Endothelial cell of umbilical vein (primary cell): ENCODE measurements at regions of chr1 and their contacts with region 1.

Region 1: GRCh38 chr1:155091071-155091709 is 12.6 kb downstream of the EFNA3 start:
- DNase-seq: peak; percentile 77
- H3K4me3 ChIP-seq: no peak overlapping the region
- H3K27ac ChIP-seq: no peak overlapping the region
- H3K4me1 ChIP-seq: no peaks in the 10 kb centered on the region
- H3K27me3 ChIP-seq: peaks cover 4 to 16% of the 10 kb centered on the region in 2 experiments
- CTCF ChIP-seq: peak; percentile 94 to 99
- POLR2A ChIP-seq: no peak

Region 2: DNA sequence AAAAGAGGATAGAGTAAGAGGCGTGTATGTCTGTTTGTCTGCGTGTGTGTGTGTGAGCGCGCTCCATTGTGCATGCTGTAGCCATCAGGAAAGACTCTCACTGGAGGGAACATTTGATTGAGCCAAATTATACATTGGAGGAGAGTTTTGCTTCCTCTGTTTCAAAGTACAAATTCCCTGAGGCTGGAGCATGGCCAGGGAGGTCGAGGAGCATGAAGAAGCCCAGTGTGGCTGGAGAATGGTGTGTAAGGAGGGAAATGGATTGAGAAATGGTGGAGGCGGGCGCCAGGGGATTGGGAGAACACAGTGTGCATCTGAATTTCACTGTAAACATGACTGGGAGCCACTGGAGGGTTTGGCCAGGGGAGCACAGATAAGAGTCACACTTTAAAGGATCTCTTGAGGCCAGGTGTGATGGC is 14.4 kb after region 1 on chr1:
- CTCF ChIA-PET with region 1: interaction called, 14 read pairs
- POLR2A ChIA-PET with region 1: interaction called, 6 read pairs
- dilution Hi-C with region 1: no loop called
- intact Hi-C with region 1: no loop called
- DNase-seq: peak; percentile 88
- H3K4me3 ChIP-seq: no peak overlapping the region
- H3K27ac ChIP-seq: no peak overlapping the region
- H3K4me1 ChIP-seq: peaks cover 3% of the 10 kb centered on the region
- H3K27me3 ChIP-seq: peaks cover 6 to 9% of the 10 kb centered on the region in 2 experiments
- CTCF ChIP-seq: no peak
- POLR2A ChIP-seq: no peak

Region 3: GRCh38 chr1:155127105-155127964 is 36.1 kb after region 1 on chr1 and contains the start of gene EFNA1:
- CTCF ChIA-PET with region 1: interaction called, 97 read pairs
- POLR2A ChIA-PET with region 1: no interaction called
- dilution Hi-C with region 1: no loop called
- intact Hi-C with region 1: loop called (anchors 1 kb)
- DNase-seq: peak; percentile 93
- H3K4me3 ChIP-seq: peak within 1 kb of the TSS; percentile 51 to 95 (median 91)
- H3K27ac ChIP-seq: peak within 1 kb of the TSS; percentile 68
- H3K4me1 ChIP-seq: peaks cover 59% of the 10 kb centered on the region
- H3K27me3 ChIP-seq: no peaks in the 10 kb centered on the region
- CTCF ChIP-seq: no peak
- POLR2A ChIP-seq: peak; percentile 95
- total RNA-seq, gene EFNA1: 107 and 111 TPM in 2 replicates

Region 4: DNA sequence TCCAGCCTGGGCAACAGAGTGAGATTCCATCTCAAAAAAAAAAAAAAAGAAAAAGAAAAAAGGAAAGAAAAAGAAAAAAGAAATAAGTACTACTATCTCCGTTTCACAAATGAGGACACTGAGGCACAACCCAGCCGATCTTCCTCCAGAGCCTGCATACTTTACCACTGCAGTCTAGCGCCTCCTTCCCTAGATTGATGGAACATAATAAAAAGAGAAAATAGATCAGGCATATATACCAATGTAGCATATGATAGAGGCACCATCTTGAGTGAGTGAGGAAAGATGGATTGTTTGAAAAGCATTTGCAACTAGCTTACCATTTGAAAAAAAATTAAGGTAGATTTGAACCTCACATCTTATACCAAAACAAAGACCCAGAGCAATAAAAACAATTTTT is 54.3 kb after region 1 on chr1:
- CTCF ChIA-PET with region 1: interaction called, 13 read pairs
- POLR2A ChIA-PET with region 1: no interaction called
- dilution Hi-C with region 1: no loop called
- intact Hi-C with region 1: no loop called
- DNase-seq: no peak
- H3K4me3 ChIP-seq: no peak overlapping the region
- H3K27ac ChIP-seq: no peak overlapping the region
- H3K4me1 ChIP-seq: no peaks in the 10 kb centered on the region
- H3K27me3 ChIP-seq: peaks cover 4% of the 10 kb centered on the region in 2 experiments
- CTCF ChIP-seq: no peak
- POLR2A ChIP-seq: no peak

Region 5: DNA sequence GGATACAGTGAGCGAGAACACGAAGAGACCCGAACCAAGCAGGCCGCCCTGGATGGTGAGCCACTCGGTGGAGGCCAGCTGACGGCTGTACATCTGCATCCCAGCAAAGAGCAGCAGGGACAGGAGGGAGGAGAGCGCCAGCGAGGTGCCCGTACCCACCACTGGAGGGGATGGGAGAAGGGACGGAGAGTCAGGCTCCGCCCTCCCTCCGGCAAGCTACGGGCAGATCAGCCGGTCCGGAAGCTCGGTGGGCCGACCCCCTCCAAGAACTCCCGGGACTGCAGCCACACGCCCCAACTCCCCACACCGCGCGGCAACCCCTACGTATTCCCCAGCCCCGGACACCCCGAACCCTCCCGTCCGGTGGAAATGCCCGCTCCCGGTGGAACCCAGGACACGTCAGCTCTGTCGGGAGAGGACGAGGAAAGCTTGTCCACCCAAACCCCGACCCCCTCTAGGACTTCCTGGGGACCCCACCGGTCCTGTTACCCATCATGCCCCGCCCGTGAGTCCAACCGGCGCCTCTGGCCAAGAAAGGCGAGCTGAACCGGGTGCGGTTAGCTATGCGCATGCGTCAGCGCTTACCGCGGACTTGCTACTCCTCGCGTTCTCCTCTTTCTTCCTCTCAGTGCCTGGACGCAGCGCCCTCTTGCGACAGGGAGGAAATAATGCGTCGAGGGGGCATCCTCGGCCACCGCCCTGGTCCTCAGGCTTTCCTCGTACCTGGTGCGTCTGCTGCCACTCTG is 81.7 kb after region 1 on chr1 and contains the start of gene KRTCAP2:
- CTCF ChIA-PET with region 1: interaction called, 673 read pairs
- POLR2A ChIA-PET with region 1: interaction called, 5 read pairs
- dilution Hi-C with region 1: no loop called
- intact Hi-C with region 1: loop called (anchors 1 kb)
- DNase-seq: peak; percentile 93
- H3K4me3 ChIP-seq: peak within 1 kb of the TSS; percentile 52 to 91 (median 63)
- H3K27ac ChIP-seq: peak within 1 kb of the TSS; percentile 76
- H3K4me1 ChIP-seq: peaks cover 11% of the 10 kb centered on the region
- H3K27me3 ChIP-seq: no peaks in the 10 kb centered on the region
- CTCF ChIP-seq: peak; percentile 95 to 98
- POLR2A ChIP-seq: peak; percentile 97
- total RNA-seq, gene KRTCAP2: 170 and 207 TPM in 2 replicates

Region 6: GRCh38 chr1:155455588-155456195 is 364.5 kb after region 1 on chr1:
- CTCF ChIA-PET with region 1: no interaction called
- POLR2A ChIA-PET with region 1: no interaction called
- dilution Hi-C with region 1: no loop called
- intact Hi-C with region 1: no loop called
- DNase-seq: no peak
- H3K4me3 ChIP-seq: no peak overlapping the region
- H3K27ac ChIP-seq: no peak overlapping the region
- H3K4me1 ChIP-seq: no peaks in the 10 kb centered on the region
- H3K27me3 ChIP-seq: no peaks in the 10 kb centered on the region
- CTCF ChIP-seq: no peak
- POLR2A ChIP-seq: no peak